ENCODE measurements at regions of chr2 and their contacts with region 1.

Region 1: DNA sequence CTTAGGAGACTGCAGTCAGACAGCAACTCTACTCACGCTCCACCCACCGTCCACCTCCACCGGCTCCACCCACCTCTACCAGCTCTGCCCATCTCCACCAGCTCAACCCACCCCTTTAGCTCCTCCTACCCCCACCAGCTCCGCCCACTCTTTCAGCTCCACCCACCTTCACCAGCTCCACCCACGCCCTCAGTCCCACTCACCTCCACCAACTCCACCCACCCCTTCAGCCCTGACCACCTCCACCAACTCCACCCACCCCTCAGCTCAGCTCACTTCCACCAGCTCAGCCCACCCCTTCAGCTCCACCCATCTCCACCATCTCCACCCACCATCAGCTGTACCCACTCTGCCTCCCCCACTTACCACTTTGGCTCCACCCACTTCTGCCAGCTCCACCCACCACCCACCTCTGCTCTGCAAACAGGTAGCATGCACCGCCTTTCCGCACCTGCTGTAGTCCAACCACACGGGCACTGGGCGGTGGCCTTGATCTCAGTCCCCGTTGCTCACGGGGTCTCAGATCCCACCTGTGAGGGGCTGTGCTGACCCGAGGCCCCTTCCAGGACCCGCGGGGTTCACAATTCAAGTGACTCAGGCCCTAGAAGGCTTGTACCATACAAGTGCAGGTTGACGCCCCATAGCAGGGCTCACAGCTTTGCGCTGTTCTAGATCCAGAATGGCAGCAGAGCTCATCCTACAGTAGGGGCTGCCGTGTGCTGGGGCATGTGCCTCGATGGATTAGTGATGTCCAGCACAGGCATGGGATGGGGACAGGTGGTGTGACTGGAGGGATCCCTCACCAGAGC is 77.2 kb upstream of the OTOS start:
- DNase-seq: no peak
- H3K4me3 ChIP-seq: no peak overlapping the region
- H3K27ac ChIP-seq: no peak overlapping the region
- H3K4me1 ChIP-seq: no peaks in the 10 kb centered on the region
- H3K27me3 ChIP-seq: peaks cover 3% of the 10 kb centered on the region
- CTCF ChIP-seq: no peak

Region 2: DNA sequence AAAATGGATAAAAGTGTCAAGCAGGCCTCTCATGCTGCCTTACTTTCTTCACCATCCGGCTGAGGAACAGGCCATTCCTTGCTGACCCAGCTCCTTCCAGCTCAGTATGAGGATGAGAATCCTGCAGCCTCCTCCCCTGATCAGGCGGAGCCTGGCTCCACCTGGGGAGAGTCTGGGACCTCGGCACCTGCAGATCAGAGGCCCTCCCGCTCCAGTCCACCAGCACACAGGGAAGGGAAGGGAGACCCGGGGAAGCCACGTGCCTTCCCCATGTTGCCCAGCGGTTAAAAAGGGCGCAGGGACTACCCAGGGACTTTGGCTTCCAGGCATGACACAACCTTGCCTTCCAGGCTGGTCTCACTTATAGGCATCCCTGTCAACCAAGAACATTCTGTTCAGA is 364.5 kb before region 1 on chr2:
- CTCF ChIA-PET with region 1: no interaction called
- dilution Hi-C with region 1: no loop called
- in situ Hi-C with region 1: no loop called
- intact Hi-C with region 1: no loop called
- DNase-seq: no peak
- H3K4me3 ChIP-seq: no peak overlapping the region
- H3K27ac ChIP-seq: no peak overlapping the region
- H3K4me1 ChIP-seq: no peaks in the 10 kb centered on the region
- H3K27me3 ChIP-seq: no peaks in the 10 kb centered on the region
- CTCF ChIP-seq: no peak

Region 3: GRCh38 chr2:239934571-239935171 is 283.0 kb before region 1 on chr2:
- CTCF ChIA-PET with region 1: no interaction called
- dilution Hi-C with region 1: no loop called
- in situ Hi-C with region 1: no loop called
- intact Hi-C with region 1: no loop called
- DNase-seq: no peak
- H3K4me3 ChIP-seq: no peak overlapping the region
- H3K27ac ChIP-seq: no peak overlapping the region
- H3K4me1 ChIP-seq: no peaks in the 10 kb centered on the region
- H3K27me3 ChIP-seq: no peaks in the 10 kb centered on the region
- CTCF ChIP-seq: peak; percentile 48 to 51

Region 4: GRCh38 chr2:240041363-240041762 is 176.3 kb before region 1 on chr2:
- CTCF ChIA-PET with region 1: interaction called, 15 read pairs
- dilution Hi-C with region 1: no loop called
- in situ Hi-C with region 1: no loop called
- intact Hi-C with region 1: no loop called
- DNase-seq: no peak
- H3K4me3 ChIP-seq: no peak overlapping the region
- H3K27ac ChIP-seq: no peak overlapping the region
- H3K4me1 ChIP-seq: no peaks in the 10 kb centered on the region
- H3K27me3 ChIP-seq: peaks cover 9% of the 10 kb centered on the region
- CTCF ChIP-seq: no peak

Region 5: GRCh38 chr2:240179941-240180666 is 37.5 kb before region 1 on chr2:
- CTCF ChIA-PET with region 1: interaction called, 3 read pairs
- dilution Hi-C with region 1: loop called (anchors 5 kb)
- in situ Hi-C with region 1: no loop called
- intact Hi-C with region 1: no loop called
- DNase-seq: peak; percentile 39
- H3K4me3 ChIP-seq: no peak overlapping the region
- H3K27ac ChIP-seq: no peak overlapping the region
- H3K4me1 ChIP-seq: no peaks in the 10 kb centered on the region
- H3K27me3 ChIP-seq: peaks cover 3% of the 10 kb centered on the region
- CTCF ChIP-seq: no peak

Region 6: GRCh38 chr2:240320204-240320993 is 102.8 kb after region 1 on chr2:
- CTCF ChIA-PET with region 1: no interaction called
- dilution Hi-C with region 1: no loop called
- in situ Hi-C with region 1: no loop called
- intact Hi-C with region 1: no loop called
- DNase-seq: peak; percentile 93
- H3K4me3 ChIP-seq: no peak overlapping the region
- H3K27ac ChIP-seq: peak overlapping the region; percentile 30
- H3K4me1 ChIP-seq: peaks cover 35% of the 10 kb centered on the region
- H3K27me3 ChIP-seq: no peaks in the 10 kb centered on the region
- CTCF ChIP-seq: no peak